PC-9 (cell line): ENCODE measurements at regions of chr13 and their contacts with region 1.

Region 1: DNA sequence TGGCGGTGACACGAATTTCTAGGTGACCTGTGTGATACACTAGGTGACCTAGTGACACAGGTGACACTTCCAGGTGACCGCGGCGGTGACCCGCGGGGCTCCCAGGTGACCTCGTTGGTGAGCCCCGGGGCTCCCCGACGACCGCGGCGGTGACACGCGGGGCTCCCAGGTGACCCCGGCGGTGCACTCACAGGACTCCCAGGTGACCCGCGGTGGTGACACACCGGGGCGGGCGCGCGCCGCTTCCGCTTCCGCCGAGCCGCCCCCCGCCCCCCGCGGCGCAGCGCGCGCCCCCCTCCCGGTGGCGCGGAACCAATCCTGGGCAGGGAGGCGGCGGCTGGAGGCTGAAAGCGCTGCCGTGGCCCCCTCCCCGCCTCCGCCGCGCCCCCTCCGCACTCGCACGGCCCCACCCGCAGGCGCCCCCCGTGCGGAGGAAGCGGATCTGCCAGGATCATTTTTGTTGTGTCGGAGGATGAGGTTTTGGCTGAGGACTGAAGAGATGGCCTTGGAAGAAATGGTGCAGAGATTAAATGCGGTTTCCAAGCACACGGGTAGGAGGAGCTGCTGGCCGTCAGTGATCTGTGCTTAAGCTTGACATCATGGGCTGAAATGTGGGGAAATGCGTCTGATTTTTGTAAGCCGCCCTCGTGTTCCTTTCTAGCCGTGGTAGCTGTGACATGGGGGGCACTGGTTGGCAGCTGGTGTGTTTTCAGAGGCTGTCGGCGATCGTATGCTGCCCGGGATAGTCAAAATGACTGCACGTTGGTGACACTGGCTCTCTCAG is at the start of gene MCF2L:
- DNase-seq: peak; percentile 58 to 61
- H3K4me3 ChIP-seq: peak within 1 kb of the TSS; percentile 72
- H3K27ac ChIP-seq: no peak within 1 kb of the TSS
- H3K4me1 ChIP-seq: peaks cover 15% of the 10 kb centered on the region; the same call in 1 of the 2 replicates
- H3K27me3 ChIP-seq: no peaks in the 10 kb centered on the region
- CTCF ChIP-seq: peak; percentile 53
- total RNA-seq, gene MCF2L: 21.7 and 28.2 TPM in 2 replicates

Region 2: DNA sequence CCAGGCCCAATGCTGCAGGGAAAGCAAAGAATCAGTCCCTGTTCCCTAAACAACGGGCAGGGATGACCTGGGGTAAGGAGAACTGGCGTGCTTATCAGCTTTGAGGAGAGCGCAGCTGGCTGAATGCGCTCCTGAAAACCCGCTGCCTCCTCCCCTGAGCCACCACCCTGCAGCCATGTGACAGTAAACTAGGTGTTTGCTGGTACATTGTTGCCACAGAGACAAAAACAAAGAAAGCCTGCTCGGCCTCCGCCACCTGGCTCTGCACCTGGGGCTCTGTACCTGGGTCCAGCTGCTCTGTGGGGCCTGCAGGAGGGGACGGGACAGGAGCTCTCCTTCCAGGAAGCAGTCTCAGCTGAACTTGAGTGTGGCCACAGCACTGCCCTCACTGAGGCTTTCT is 21.7 kb after region 1 on chr13:
- CTCF ChIA-PET with region 1: no interaction called
- POLR2A ChIA-PET with region 1: interaction called, 8 read pairs
- intact Hi-C with region 1: loop called (anchors 2 kb)
- DNase-seq: peak; percentile 82
- H3K4me3 ChIP-seq: no peak overlapping the region
- H3K27ac ChIP-seq: no peak overlapping the region
- H3K4me1 ChIP-seq: peaks cover 11% of the 10 kb centered on the region; the same call in 1 of the 2 replicates
- H3K27me3 ChIP-seq: no peaks in the 10 kb centered on the region
- CTCF ChIP-seq: no peak

Region 3: GRCh38 chr13:113001241-113002140 is 32.4 kb after region 1 on chr13:
- CTCF ChIA-PET with region 1: interaction called, 3 read pairs
- POLR2A ChIA-PET with region 1: no interaction called
- intact Hi-C with region 1: loop called (anchors 1 kb)
- DNase-seq: peak; percentile 90 to 91
- H3K4me3 ChIP-seq: peak overlapping the region; percentile 72
- H3K27ac ChIP-seq: peak overlapping the region; percentile 58
- H3K4me1 ChIP-seq: peaks cover 32% of the 10 kb centered on the region
- H3K27me3 ChIP-seq: no peaks in the 10 kb centered on the region
- CTCF ChIP-seq: no peak

Region 4: DNA sequence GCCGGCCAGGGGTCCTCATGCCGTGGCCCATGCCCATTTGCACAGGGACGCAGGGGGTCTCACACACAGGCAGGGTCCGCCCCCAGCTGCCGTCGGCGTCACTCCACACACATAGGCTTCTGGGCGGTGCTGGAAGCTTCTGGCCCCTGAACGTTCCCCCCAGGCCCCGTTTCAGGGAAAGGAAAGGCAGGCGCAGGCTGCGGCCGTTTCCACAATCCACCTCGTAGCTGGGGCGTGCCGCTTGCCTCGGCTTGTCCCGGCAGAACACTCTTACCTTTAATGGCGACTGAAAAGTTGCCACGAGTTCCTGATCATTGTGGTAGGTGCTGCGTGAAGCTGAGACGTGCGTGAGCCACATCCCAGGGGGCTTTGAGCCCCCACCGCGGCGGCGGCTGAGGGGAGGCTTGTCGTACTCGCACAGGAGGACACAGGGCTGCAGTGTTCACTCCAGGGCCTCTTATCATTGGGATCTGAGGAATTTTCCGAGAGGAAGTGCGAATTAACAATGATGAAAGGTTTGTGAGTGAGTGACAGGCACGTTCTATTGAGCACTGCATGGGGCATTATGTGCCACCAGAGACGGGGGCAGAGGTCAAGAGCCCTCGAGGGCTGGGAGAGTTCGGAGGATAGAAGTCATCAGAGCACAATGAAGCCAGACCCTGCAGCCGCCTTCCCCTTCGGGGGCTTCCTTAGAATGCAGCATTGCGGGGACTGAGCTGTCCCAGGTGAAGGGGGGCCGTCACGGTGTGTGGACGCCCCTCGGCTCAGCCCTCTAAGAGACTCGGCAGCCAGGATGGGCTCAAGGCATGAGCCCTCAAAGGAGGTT is 53.5 kb after region 1 on chr13:
- CTCF ChIA-PET with region 1: no interaction called
- POLR2A ChIA-PET with region 1: no interaction called
- intact Hi-C with region 1: loop called (anchors 2 kb)
- DNase-seq: peak; percentile 64 to 92
- H3K4me3 ChIP-seq: peak overlapping the region; percentile 68
- H3K27ac ChIP-seq: peak overlapping the region; percentile 72
- H3K4me1 ChIP-seq: peaks cover 33% of the 10 kb centered on the region
- H3K27me3 ChIP-seq: no peaks in the 10 kb centered on the region
- CTCF ChIP-seq: no peak

Region 5: GRCh38 chr13:113296842-113297369 is 327.8 kb after region 1 on chr13 and contains the start of gene LAMP1:
- CTCF ChIA-PET with region 1: interaction called, 11 read pairs
- POLR2A ChIA-PET with region 1: no interaction called
- intact Hi-C with region 1: no loop called
- DNase-seq: peak; percentile 87 to 98
- H3K4me3 ChIP-seq: peak within 1 kb of the TSS; percentile 78
- H3K27ac ChIP-seq: peak within 1 kb of the TSS; percentile 70
- H3K4me1 ChIP-seq: peaks cover 25% of the 10 kb centered on the region
- H3K27me3 ChIP-seq: no peaks in the 10 kb centered on the region
- CTCF ChIP-seq: no peak
- total RNA-seq, gene LAMP1: 186 and 263 TPM in 2 replicates